ENCODE measurements at regions of chr5 and their contacts with region 1.

Region 1: DNA sequence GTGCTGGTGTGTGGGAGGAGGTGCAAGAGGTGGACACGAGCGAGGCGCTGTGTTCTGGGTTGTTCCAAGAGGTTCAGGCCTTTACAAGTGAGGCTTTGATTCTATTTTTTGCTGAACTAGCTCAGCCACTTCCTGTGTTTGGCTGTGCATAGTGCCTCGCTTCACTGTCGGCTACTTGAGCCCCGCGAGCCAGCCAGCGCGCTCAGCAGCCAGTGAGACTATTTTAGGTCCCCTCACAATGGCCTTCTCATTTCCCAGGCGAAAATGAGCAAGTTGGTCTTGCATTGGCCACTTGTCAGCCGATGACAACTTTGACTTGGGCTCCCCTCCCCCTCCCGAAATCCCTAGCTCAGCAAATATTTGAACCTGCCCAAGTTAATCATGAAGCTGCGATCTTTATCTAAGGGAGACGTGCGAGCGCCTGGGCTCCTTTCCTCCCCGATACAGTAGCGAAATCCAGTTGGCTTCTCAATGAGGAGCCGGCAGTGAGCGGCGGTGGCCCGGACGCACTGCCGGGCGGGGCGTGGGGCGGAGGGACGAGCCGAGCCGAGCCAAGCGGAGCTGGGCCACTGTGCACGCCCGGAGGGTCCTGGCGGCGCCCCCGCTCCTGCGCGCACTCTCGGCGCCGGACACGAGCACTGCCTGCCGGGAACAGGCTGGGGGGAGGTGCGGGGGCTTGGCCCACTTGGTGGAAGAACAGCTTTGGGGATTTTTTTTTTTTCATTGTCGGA is 72.6 kb downstream of the PIK3R1 start:
- DNase-seq: no peak
- H3K4me3 ChIP-seq: peak overlapping the region; percentile 34
- H3K27me3 ChIP-seq: no peaks in the 10 kb centered on the region
- CTCF ChIP-seq: no peak

Region 2: DNA sequence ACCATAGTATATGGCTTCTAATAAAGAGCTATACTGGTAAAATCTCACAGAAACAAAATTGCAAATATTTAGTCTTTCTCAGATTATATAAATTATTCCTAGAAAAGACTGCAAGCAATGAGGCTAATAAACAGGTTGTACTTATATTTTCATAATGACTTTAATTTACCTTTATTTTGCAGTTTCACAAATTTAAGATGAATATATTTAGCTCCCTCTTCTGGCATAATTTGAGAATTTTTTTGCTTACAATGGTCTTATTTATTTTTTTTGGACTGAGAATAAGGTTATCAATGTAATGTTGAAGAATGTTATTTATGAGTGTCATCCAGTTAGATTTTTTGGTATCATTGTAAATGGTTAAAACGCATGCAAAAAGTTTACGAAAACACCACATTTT is 15.9 kb before region 1 on chr5:
- CTCF ChIA-PET with region 1: interaction called, 10 read pairs
- POLR2A ChIA-PET with region 1: no interaction called
- DNase-seq: no peak
- H3K4me3 ChIP-seq: no peak overlapping the region
- H3K27me3 ChIP-seq: no peaks in the 10 kb centered on the region
- CTCF ChIP-seq: 0 out of 2 replicates have a peak, but pooled peaks have one; percentile 20

Region 3: GRCh38 chr5:68454766-68455165 is 166.6 kb after region 1 on chr5:
- CTCF ChIA-PET with region 1: interaction called, 26 read pairs
- POLR2A ChIA-PET with region 1: no interaction called
- DNase-seq: no peak
- H3K4me3 ChIP-seq: no peak overlapping the region
- H3K27me3 ChIP-seq: no peaks in the 10 kb centered on the region
- CTCF ChIP-seq: no peak

Region 4: DNA sequence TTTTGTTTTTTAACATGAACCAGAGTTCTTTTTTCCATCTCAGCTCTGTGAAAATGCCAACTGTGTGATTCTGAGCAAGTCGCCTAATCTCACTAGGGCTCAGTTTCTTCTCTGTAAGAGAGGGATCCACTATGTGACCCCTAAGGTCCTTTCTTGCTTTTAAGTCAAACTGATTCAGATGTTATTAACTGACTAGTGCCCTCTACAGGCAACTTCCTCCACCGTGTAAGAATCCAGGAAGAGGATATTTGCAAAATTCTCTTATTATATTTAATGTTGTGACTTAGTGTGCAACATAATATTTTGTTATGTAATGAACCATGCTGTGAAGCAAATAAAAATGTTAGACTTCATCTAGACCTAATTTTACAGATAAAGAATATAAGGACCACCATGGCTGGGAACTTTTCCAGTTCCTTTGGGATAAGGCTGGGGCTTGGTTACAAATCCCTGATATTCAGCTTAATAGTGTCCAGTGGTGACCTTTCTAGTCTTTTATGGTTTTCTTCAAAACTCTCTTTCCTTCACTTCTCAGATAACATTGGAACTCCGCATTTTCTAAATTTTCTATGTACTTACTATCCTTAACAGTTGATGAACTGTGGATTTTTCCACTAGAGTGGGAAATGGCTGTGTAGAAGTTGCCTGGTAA is 172.1 kb after region 1 on chr5:
- CTCF ChIA-PET with region 1: interaction called, 26 read pairs
- POLR2A ChIA-PET with region 1: no interaction called
- DNase-seq: no peak
- H3K4me3 ChIP-seq: no peak overlapping the region
- H3K27me3 ChIP-seq: no peaks in the 10 kb centered on the region
- CTCF ChIP-seq: peak; percentile 71

Region 5: DNA sequence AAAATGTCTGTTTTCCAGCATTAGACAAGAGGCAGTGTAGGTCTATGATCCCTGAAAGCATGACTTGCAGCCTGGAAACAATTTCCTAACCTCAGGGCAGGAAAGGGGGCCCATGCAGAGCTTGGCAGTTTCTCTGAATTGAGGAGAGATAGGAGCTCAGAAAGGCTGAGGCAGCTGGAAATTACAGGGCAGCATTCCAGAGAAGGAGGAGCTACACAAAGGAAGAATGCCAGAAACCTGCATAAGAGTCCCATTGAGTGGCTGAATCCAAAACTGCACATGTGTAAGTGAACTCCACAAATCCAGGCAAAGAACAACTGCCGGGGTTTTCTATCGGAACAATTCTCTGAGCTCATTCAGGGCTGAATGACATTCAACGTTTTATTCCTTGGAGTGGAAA is 274.2 kb after region 1 on chr5:
- CTCF ChIA-PET with region 1: no interaction called
- POLR2A ChIA-PET with region 1: no interaction called
- DNase-seq: no peak
- H3K4me3 ChIP-seq: no peak overlapping the region
- H3K27me3 ChIP-seq: no peaks in the 10 kb centered on the region
- CTCF ChIP-seq: no peak

Measured in BJ (cell line).